B cell (primary cell): ENCODE measurements at regions of chr5 and their contacts with region 1.

Region 1: GRCh38 chr5:180860887-180861822 is at the start of gene ZFP62:
- DNase-seq: peak; percentile 95
- ATAC-seq: peak; percentile 81
- H3K4me3 ChIP-seq: peak within 1 kb of the TSS; percentile 67 to 99 (median 94)
- H3K4me3 Mint-ChIP-seq: peak within 1 kb of the TSS; percentile 88
- H3K27ac ChIP-seq: peak within 1 kb of the TSS; percentile 83 to 89
- H3K27ac Mint-ChIP-seq: peak within 1 kb of the TSS; percentile 98
- H3K4me1 ChIP-seq: peaks cover 7 to 8% of the 10 kb centered on the region in 2 donors
- H3K4me1 Mint-ChIP-seq: peaks cover 11% of the 10 kb centered on the region
- H3K27me3 ChIP-seq: no peaks in the 10 kb centered on the region
- H3K27me3 Mint-ChIP-seq: peaks cover 7% of the 10 kb centered on the region
- CTCF ChIP-seq: peak; percentile 36
- total RNA-seq, gene ZFP62: 61.8 and 65.1 TPM in 2 replicates

Region 2: GRCh38 chr5:180769821-180770220 is 91.3 kb before region 1 on chr5:
- CTCF ChIA-PET with region 1: no interaction called
- POLR2A ChIA-PET with region 1: no interaction called
- intact Hi-C with region 1: no loop called
- DNase-seq: no peak
- ATAC-seq: no peak
- H3K4me3 ChIP-seq: no peak overlapping the region
- H3K4me3 Mint-ChIP-seq: no peak overlapping the region
- H3K27ac ChIP-seq: no peak overlapping the region
- H3K27ac Mint-ChIP-seq: no peak overlapping the region
- H3K4me1 ChIP-seq: no peaks in the 10 kb centered on the region
- H3K4me1 Mint-ChIP-seq: no peaks in the 10 kb centered on the region
- H3K27me3 ChIP-seq: peaks cover 0 to 4% (median 1%) of the 10 kb centered on the region in 4 experiments
- H3K27me3 Mint-ChIP-seq: peaks cover 34% of the 10 kb centered on the region
- CTCF ChIP-seq: no peak

Region 3: DNA sequence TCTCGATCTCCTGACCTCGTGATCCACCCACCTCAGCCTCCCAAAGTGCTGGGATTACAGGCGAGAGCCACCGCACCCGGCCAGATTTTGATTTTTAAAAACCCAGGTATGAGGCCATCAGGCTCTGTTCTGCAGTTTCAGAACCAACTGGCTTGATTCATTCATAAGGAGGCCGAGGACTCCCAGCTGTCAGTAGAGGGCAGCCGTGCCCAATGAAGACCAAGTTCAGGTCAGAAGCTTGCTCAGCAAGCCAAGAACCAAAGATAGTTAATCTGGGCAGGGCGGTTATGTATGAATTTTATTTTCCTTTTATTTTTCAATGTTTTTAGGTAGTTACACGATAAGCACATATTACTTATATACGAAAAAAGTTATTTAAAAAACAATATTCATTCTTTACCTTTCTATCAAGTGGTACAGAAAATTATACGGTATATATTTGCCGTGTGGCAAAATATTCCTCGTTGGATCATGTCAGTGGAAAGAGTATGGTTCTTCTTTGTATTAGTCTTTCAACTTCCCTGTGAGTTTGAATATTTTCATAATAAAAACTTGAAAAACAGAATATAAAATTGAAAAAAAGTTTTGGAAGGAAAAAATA is 76.6 kb before region 1 on chr5:
- CTCF ChIA-PET with region 1: interaction called, 9 read pairs
- POLR2A ChIA-PET with region 1: interaction called, 4 read pairs
- intact Hi-C with region 1: loop called (anchors 1 kb)
- DNase-seq: peak; percentile 80
- ATAC-seq: peak; percentile 92
- H3K4me3 ChIP-seq: no peak overlapping the region
- H3K4me3 Mint-ChIP-seq: no peak overlapping the region
- H3K27ac ChIP-seq: no peak overlapping the region
- H3K27ac Mint-ChIP-seq: no peak overlapping the region
- H3K4me1 ChIP-seq: no peaks in the 10 kb centered on the region
- H3K4me1 Mint-ChIP-seq: peaks cover 12% of the 10 kb centered on the region
- H3K27me3 ChIP-seq: no peaks in the 10 kb centered on the region
- H3K27me3 Mint-ChIP-seq: no peaks in the 10 kb centered on the region
- CTCF ChIP-seq: peak; percentile 79

Region 4: DNA sequence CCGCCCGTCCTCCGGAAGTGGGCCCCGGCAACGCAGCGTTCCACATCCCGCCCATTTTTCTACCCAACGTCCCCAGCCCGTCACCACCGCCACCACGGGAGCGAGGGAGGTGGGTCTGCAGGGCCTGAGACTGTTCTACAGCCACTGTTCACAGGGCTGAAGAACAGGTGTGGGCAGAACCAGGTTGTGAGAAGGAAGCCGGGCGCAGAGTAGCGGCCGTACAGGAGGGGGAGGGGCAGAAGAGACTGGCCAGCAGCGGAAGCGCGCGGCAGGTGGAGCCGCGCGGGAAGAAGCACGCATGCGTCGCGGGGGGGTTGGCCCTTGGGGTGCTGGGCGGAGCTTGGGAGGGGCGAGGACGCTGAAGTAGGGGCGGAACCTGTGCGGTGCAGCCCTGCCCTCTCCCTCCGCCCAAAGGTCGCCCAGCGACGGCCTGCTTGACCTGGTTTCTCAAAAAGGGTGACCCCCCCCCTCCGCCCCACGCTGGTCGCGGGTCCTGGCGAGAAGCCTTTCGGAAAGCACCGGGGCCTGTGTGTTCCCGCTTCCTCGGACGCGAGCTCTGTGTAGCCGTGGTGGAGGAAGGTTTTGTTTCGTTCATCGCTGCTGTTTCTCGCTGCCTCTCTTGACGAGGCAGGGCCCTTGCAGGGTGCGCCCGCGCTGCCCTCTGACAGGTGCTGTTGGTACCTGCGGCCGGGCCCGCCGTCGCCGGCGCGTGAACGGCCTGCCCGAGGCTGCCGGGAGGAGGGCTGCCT is 50.8 kb before region 1 on chr5:
- CTCF ChIA-PET with region 1: interaction called, 3 read pairs
- POLR2A ChIA-PET with region 1: interaction called, 20 read pairs
- intact Hi-C with region 1: loop called (anchors 1 kb)
- DNase-seq: peak; percentile 99
- ATAC-seq: peak; percentile 82
- H3K4me3 ChIP-seq: peak overlapping the region; percentile 47 to 94 (median 71)
- H3K4me3 Mint-ChIP-seq: peak overlapping the region; percentile 88
- H3K27ac ChIP-seq: peak overlapping the region; percentile 81 to 91
- H3K27ac Mint-ChIP-seq: peak overlapping the region; percentile 95
- H3K4me1 ChIP-seq: peaks cover 52 to 60% of the 10 kb centered on the region in 2 donors
- H3K4me1 Mint-ChIP-seq: peaks cover 67% of the 10 kb centered on the region
- H3K27me3 ChIP-seq: no peaks in the 10 kb centered on the region
- H3K27me3 Mint-ChIP-seq: no peaks in the 10 kb centered on the region
- CTCF ChIP-seq: no peak

Region 5: DNA sequence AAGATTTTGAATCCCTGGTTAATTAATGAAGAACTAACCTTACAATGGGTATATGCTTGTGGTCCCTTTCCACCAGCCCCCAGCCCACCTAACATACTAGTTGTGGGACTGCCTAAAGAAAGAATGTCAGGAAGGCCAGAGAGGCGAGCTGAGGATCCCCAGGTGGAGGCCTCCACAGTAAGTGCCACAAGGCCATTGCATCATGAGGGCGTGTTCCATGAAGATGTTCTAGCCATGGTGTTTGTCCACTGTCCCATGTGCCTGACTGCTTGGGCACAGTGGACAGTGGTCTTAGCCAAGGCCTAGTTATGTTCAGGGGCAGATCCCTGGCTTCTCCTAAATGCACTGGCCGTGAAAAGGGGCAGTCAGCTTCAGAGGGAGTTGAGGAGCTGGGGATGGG is 21.2 kb before region 1 on chr5:
- CTCF ChIA-PET with region 1: no interaction called
- POLR2A ChIA-PET with region 1: no interaction called
- intact Hi-C with region 1: no loop called
- DNase-seq: no peak
- ATAC-seq: no peak
- H3K4me3 ChIP-seq: no peak overlapping the region
- H3K4me3 Mint-ChIP-seq: no peak overlapping the region
- H3K27ac ChIP-seq: no peak overlapping the region
- H3K27ac Mint-ChIP-seq: no peak overlapping the region
- H3K4me1 ChIP-seq: peaks cover 0 to 2% of the 10 kb centered on the region in 2 donors
- H3K4me1 Mint-ChIP-seq: peaks cover under 1% of the 10 kb centered on the region
- H3K27me3 ChIP-seq: no peaks in the 10 kb centered on the region
- H3K27me3 Mint-ChIP-seq: no peaks in the 10 kb centered on the region
- CTCF ChIP-seq: no peak

Region 6: GRCh38 chr5:180975338-180975737 is 114.2 kb after region 1 on chr5:
- CTCF ChIA-PET with region 1: no interaction called
- POLR2A ChIA-PET with region 1: no interaction called
- intact Hi-C with region 1: loop called (anchors 5 kb)
- DNase-seq: peak; percentile 80
- ATAC-seq: peak; percentile 99
- H3K4me3 ChIP-seq: no peak overlapping the region
- H3K4me3 Mint-ChIP-seq: peak overlapping the region; percentile 18
- H3K27ac ChIP-seq: peak overlapping the region; percentile 71 to 83
- H3K27ac Mint-ChIP-seq: peak overlapping the region; percentile 66
- H3K4me1 ChIP-seq: peaks cover 12 to 20% of the 10 kb centered on the region in 2 donors
- H3K4me1 Mint-ChIP-seq: peaks cover 36% of the 10 kb centered on the region
- H3K27me3 ChIP-seq: no peaks in the 10 kb centered on the region
- H3K27me3 Mint-ChIP-seq: no peaks in the 10 kb centered on the region
- CTCF ChIP-seq: no peak

Region 7: GRCh38 chr5:181028032-181028819 is 167.1 kb after region 1 on chr5:
- CTCF ChIA-PET with region 1: no interaction called
- POLR2A ChIA-PET with region 1: no interaction called
- intact Hi-C with region 1: no loop called
- DNase-seq: no peak
- ATAC-seq: no peak
- H3K4me3 ChIP-seq: no peak overlapping the region
- H3K4me3 Mint-ChIP-seq: no peak overlapping the region
- H3K27ac ChIP-seq: no peak overlapping the region
- H3K27ac Mint-ChIP-seq: no peak overlapping the region
- H3K4me1 ChIP-seq: no peaks in the 10 kb centered on the region
- H3K4me1 Mint-ChIP-seq: no peaks in the 10 kb centered on the region
- H3K27me3 ChIP-seq: peaks cover 0 to 9% (median 1%) of the 10 kb centered on the region in 4 experiments
- H3K27me3 Mint-ChIP-seq: peaks cover 36% of the 10 kb centered on the region
- CTCF ChIP-seq: no peak

Region 8: GRCh38 chr5:181133610-181134231 is 272.6 kb after region 1 on chr5:
- CTCF ChIA-PET with region 1: no interaction called
- POLR2A ChIA-PET with region 1: no interaction called
- intact Hi-C with region 1: no loop called
- DNase-seq: no peak
- ATAC-seq: no peak
- H3K4me3 ChIP-seq: no peak overlapping the region
- H3K4me3 Mint-ChIP-seq: no peak overlapping the region
- H3K27ac ChIP-seq: no peak overlapping the region
- H3K27ac Mint-ChIP-seq: no peak overlapping the region
- H3K4me1 ChIP-seq: no peaks in the 10 kb centered on the region
- H3K4me1 Mint-ChIP-seq: no peaks in the 10 kb centered on the region
- H3K27me3 ChIP-seq: peaks cover 0 to 19% (median 7%) of the 10 kb centered on the region in 4 experiments
- H3K27me3 Mint-ChIP-seq: peaks cover 41% of the 10 kb centered on the region
- CTCF ChIP-seq: no peak

Region 9: DNA sequence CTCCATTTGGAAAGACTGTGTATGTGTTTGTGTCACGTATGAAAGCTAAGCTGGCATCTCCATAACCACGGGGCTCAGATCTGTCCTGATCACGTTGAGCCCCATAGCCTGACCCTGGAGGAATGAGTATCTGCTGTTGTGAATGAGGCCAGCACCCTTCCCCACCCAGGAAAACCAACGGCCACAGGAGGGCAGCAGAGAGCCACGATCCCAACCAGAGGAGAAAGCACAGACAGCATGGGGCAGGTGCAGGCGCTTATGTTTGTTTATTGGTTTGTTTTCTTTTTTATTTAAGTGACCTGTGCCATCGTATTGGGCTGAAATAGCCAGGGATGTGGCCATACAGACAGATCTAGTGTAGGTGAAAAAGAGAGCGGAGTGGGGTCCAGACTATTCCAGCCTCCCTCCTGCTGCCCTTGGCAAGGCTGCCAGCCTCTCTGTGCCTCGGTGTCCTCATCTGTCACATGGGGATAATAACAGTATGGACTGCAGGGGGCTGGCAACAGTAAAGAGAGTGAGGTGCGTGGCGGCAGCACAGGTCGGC is 298.2 kb after region 1 on chr5:
- CTCF ChIA-PET with region 1: interaction called, 3 read pairs
- POLR2A ChIA-PET with region 1: no interaction called
- intact Hi-C with region 1: loop called (anchors 2 kb)
- DNase-seq: peak; percentile 89
- ATAC-seq: peak; percentile 76
- H3K4me3 ChIP-seq: no peak overlapping the region
- H3K4me3 Mint-ChIP-seq: peak overlapping the region; percentile 70
- H3K27ac ChIP-seq: no peak overlapping the region
- H3K27ac Mint-ChIP-seq: peak overlapping the region; percentile 80
- H3K4me1 ChIP-seq: peaks cover 17 to 28% of the 10 kb centered on the region in 2 donors
- H3K4me1 Mint-ChIP-seq: peaks cover 25% of the 10 kb centered on the region
- H3K27me3 ChIP-seq: peaks cover 0 to 33% (median 2%) of the 10 kb centered on the region in 4 experiments
- H3K27me3 Mint-ChIP-seq: peaks cover 9% of the 10 kb centered on the region
- CTCF ChIP-seq: peak; percentile 96

Region 10: GRCh38 chr5:181223058-181223728 is 362.0 kb after region 1 on chr5 and contains the start of gene TRIM41:
- CTCF ChIA-PET with region 1: no interaction called
- POLR2A ChIA-PET with region 1: interaction called, 5 read pairs
- intact Hi-C with region 1: loop called (anchors 1 kb)
- DNase-seq: peak; percentile 99
- ATAC-seq: peak; percentile 68
- H3K4me3 ChIP-seq: peak within 1 kb of the TSS; percentile 68 to 95 (median 89)
- H3K4me3 Mint-ChIP-seq: peak within 1 kb of the TSS; percentile 94
- H3K27ac ChIP-seq: peak within 1 kb of the TSS; percentile 95
- H3K27ac Mint-ChIP-seq: peak within 1 kb of the TSS; percentile 98
- H3K4me1 ChIP-seq: peaks cover 18 to 41% of the 10 kb centered on the region in 2 donors
- H3K4me1 Mint-ChIP-seq: peaks cover 54% of the 10 kb centered on the region
- H3K27me3 ChIP-seq: no peaks in the 10 kb centered on the region
- H3K27me3 Mint-ChIP-seq: no peaks in the 10 kb centered on the region
- CTCF ChIP-seq: no peak
- total RNA-seq, gene TRIM41: 44.3 and 45.2 TPM in 2 replicates